ENCODE measurements at regions of chr10 and their contacts with region 1.

Region 1: GRCh38 chr10:45008524-45009161 is 7.9 kb downstream of the ZNF22 start:
- DNase-seq: peak; percentile 33
- H3K4me3 Mint-ChIP-seq: no peak overlapping the region
- H3K27ac Mint-ChIP-seq: no peak overlapping the region
- H3K4me1 Mint-ChIP-seq: no peaks in the 10 kb centered on the region
- H3K27me3 Mint-ChIP-seq: no peaks in the 10 kb centered on the region

Region 2: DNA sequence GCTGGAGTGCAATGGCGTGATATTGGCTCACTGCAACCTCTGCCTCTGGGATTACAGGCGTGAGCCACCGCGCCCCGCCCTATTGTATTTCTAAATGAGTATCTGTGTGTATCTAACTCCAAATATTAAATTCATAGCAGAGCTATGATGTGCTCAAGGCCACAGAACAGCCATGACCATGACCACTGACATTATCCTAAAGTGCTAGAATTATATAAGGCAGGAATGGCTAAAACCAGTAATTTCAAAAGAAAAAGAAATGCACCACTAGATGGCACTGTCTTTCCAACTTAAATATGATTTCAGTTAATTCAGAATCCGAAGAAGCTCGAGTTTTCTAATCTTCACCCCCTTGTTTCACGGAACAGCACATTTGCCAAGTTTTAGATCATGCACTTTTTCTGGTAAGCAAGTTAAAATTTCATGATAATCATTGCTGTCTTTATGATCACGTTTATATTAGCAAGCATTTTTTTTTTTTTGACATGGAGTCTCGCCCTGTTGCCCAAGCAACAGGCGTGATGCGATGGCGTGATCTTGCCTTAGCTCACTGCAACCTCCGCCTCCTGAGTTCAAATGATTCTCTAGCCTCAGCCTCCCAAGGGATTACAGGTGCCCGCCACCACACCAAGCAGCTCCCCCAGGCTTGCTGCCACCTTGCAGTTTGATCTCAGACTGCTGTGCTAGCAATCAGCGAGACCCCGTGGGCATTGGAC is 241.5 kb after region 1 on chr10:
- CTCF ChIA-PET with region 1: interaction called, 6 read pairs
- intact Hi-C with region 1: loop called (anchors 5 kb)
- DNase-seq: no peak
- H3K4me3 Mint-ChIP-seq: no peak overlapping the region
- H3K27ac Mint-ChIP-seq: no peak overlapping the region
- H3K4me1 Mint-ChIP-seq: peaks cover 2% of the 10 kb centered on the region
- H3K27me3 Mint-ChIP-seq: no peaks in the 10 kb centered on the region

Region 3: DNA sequence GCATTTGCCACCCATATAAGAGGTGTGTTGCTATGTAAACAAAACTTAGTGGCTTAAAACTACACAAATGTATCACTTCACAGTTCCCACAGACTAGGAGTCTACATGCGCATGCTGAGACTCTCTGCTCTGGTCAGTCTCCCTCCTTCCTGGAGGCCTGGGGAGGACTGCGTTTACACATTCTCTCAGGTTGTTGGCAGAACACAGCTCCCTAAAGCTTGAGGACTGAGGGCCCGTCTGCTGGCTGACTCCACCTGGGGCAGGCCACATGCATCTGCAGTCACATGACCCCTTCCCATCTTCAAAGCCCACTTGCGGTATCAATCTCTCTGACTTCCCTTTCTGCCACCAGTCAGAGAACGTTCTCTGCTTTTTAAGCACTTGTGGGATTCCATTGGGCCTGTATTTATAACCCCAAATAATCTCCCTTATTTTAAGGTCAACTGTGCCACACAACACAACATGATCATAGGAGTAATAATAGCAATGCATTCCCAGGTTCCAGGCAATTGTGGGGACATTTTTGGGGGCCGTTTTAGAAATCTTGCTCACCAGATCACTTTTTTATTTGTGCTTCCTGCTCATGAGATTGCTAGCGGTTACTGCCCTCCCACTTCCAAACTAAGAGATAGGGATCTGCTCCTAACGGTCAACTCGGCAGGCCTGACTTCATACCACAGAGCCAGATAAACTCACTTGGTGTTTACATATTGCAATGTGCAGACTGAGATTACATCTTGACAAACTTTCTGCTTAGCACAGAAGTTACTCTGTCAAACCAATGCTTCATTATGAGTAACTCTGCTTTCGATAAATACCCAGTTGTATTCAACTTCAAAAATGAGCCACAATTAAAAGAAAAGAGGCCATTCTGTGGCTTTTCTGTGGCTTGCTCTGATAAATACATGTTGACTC is 461.7 kb after region 1 on chr10:
- CTCF ChIA-PET with region 1: no interaction called
- intact Hi-C with region 1: loop called (anchors 10 kb)
- DNase-seq: peak; percentile 77
- H3K4me3 Mint-ChIP-seq: peak overlapping the region; percentile 48
- H3K27ac Mint-ChIP-seq: peak overlapping the region; percentile 87
- H3K4me1 Mint-ChIP-seq: peaks cover 27% of the 10 kb centered on the region
- H3K27me3 Mint-ChIP-seq: no peaks in the 10 kb centered on the region